ENCODE measurements at regions of chr3 and their contacts with region 1.

Region 1: DNA sequence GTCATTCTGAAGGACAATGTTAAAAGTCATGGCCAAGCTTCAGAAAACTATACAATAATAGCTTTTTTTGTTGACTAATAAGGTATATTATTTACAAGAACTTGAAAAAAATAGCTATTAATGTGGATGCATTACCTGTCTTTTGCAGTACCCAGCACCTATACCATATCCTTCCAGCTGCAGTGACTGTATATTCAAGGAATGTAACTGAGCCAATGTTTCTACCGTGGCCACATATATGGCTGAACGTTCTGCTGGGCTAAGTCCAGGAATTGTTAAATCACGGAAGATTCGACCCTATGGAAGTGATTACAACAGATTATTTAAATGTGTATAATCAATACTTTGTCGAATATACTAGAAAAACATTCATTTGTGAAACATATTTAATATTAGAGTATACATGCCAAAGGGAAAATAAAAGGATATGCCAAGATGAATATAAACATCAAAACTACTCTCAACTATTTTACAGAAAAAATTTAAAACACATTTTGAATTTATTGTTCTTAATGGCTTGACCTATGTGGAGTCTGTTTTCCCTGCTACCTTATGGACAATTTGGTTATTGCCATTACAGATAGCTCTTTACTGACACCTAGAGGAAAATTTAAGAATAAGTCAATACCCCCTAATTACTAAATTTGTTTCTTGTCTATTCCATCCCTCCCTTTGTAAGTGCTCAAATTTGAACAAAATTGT is 17.6 kb downstream of the ACAD11 start:
- DNase-seq: no peak
- H3K4me3 ChIP-seq: no peak overlapping the region
- H3K27ac ChIP-seq: no peak overlapping the region
- H3K4me1 ChIP-seq: no peaks in the 10 kb centered on the region
- H3K27me3 ChIP-seq: no peaks in the 10 kb centered on the region
- CTCF ChIP-seq: peak; percentile 58 to 89 (median 82)
- POLR2A ChIP-seq: no peak

Region 2: DNA sequence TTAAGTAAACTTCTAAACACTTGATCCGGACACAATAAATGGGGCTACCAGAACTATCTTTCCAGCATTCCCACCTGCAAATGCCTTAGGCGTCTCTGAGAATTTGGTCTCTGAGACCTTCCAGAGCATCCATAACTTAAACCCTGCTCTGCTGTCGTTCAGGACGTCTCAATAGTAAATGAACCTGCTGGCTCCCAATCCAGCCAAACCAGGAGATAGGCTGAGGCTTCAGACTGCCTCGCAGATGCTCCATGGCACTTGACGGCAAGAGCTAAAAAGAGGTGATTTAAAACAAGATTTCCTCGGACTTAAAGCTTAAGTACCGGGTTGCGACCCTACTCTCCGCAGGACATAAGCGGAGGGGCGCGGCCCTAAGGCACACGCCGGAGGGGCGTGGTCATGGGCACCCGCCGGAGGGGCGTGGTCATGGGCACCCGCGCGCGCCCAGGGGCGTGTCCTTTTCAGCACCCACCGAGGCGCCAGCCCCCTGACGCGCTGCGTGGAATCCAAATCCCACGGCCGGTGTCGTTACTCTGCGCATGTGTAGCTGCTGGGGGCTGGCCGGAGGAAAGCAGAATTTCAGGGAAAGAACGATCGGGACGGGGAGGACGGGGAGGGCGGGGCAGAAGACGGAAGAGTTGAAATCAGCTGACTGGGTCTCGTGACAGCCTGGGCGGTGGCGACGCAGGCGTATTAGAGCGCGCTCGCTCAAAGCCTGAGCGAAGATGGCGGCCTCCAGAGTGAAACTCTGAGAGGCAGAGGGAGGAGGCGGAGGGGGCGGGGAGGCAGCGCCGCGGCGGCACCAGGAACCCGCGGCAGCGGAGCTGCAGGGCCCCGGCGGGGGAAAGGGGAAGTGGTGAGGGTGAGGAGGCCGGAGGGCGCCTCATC is 224.9 kb before region 1 on chr3 and contains the start of gene DNAJC13:
- intact Hi-C with region 1: no loop called
- DNase-seq: peak; percentile 92 to 97 (median 95)
- H3K4me3 ChIP-seq: peak within 1 kb of the TSS; percentile 69 to 100 (median 87)
- H3K27ac ChIP-seq: peak within 1 kb of the TSS; percentile 78 to 93 (median 91)
- H3K4me1 ChIP-seq: peaks cover 5 to 27% of the 10 kb centered on the region in 2 donors
- H3K27me3 ChIP-seq: no peaks in the 10 kb centered on the region
- CTCF ChIP-seq: no peak
- POLR2A ChIP-seq: peak; percentile 22 to 77
- total RNA-seq, gene DNAJC13: 26.6 to 50.5 (median 43.2) TPM

Region 3: GRCh38 chr3:132535575-132536441 is 106.2 kb before region 1 on chr3:
- intact Hi-C with region 1: loop called (anchors 2 to 5 kb)
- DNase-seq: peak; percentile 73 to 90 (median 78)
- H3K4me3 ChIP-seq: no peak overlapping the region
- H3K27ac ChIP-seq: no peak overlapping the region
- H3K4me1 ChIP-seq: no peaks in the 10 kb centered on the region
- H3K27me3 ChIP-seq: no peaks in the 10 kb centered on the region
- CTCF ChIP-seq: peak; percentile 59 to 85 (median 73)
- POLR2A ChIP-seq: no peak

Region 4: GRCh38 chr3:132773071-132773619 is 131.2 kb after region 1 on chr3:
- intact Hi-C with region 1: no loop called
- DNase-seq: no peak
- H3K4me3 ChIP-seq: no peak overlapping the region
- H3K27ac ChIP-seq: no peak overlapping the region
- H3K4me1 ChIP-seq: no peaks in the 10 kb centered on the region
- H3K27me3 ChIP-seq: no peaks in the 10 kb centered on the region
- CTCF ChIP-seq: no peak
- POLR2A ChIP-seq: no peak

Region 5: DNA sequence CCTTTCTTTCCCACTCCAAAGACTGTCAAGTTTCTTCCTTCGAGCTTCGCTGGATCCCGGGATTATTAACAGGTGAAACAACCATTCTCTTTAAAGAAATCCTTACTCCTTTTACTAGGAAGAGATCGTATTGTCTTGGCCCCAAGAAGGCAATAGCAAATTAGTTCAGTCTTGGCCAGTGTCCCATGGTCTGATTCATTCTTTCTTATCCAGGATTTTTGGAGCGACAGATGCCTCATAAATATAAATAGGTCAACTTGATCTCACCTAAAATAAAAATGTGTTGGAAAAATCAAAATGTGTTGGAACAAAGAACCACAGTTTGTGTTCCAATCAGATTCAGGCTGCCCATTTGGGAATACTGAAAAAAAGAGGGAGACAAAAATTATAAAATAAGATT is 256.2 kb after region 1 on chr3:
- intact Hi-C with region 1: no loop called
- DNase-seq: peak in 3 of 7 donors; percentile 18 to 30 (median 26)
- H3K4me3 ChIP-seq: no peak overlapping the region
- H3K27ac ChIP-seq: no peak overlapping the region
- H3K4me1 ChIP-seq: peaks cover 0 to 8% of the 10 kb centered on the region in 2 donors
- H3K27me3 ChIP-seq: no peaks in the 10 kb centered on the region
- CTCF ChIP-seq: no peak
- POLR2A ChIP-seq: no peak

Measured in adrenal gland (tissue), 19 donors.